Psoas muscle (tissue), 8 donors: ENCODE measurements at regions of chr20 and their contacts with region 1.

Region 1: DNA sequence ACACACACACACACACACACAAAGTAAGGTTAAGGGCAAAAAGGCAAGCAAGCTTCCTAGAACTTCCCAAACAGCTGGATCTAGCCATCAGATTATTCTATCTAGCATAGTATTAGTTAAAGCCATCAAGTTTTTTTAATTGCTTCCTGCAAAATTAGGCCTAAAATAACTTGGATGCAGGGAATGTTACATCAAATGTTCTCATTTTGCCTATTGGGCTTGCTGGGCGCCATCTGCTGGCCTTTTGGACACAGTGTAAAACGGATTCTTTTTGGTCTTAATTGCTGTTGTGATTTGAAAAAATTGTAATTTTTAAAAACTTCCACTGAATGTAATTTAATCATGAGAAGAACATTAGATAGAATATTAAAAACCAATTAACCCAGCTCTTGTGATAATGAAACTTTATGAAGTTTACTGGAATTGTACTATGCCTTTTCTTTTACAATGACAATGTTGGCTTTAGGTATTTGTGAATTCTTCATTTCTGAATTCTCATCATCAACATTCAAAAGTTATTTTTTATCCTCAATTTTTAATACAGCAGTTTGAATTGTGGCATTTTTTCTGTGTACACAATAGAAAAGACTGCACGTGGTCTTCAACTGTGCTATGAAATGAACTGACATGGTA is 6.8 kb downstream of the MKKS start:
- DNase-seq: peak; percentile 29 to 64
- ATAC-seq: peak in 1 of 4 donors; percentile 77
- H3K4me3 ChIP-seq: no peak overlapping the region
- H3K27ac ChIP-seq: no peak overlapping the region
- H3K4me1 ChIP-seq: peaks cover 40% of the 10 kb centered on the region
- H3K27me3 ChIP-seq: no peaks in the 10 kb centered on the region
- CTCF ChIP-seq: peak; percentile 69

Region 2: DNA sequence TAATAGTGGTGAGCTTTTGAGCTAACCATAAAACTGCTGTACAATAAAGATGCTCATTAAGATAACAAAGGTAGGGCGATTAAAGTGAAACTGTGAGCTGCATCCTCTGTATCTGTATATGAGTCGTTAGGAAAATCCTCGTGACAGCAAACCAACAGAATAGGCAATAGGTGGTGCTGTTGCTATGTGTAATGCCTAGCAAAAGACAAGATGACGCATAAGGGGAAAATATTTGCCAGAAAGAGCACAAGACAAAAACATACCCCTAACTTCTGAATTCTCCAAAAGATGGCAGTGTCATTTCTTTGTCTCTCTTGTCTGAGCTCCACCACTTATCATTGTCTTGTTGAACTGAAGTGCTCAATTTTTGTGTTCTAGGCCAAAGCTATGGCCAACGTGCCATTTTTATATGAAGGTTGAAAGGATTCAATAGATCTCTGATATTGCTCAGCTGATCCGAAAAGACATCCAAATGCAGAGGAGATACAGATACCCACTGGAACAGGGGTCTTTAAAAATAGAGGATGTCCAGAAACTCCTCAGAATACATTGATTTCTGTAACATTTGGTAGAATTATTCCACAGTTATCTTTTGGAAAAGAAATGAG is 448.7 kb before region 1 on chr20:
- intact Hi-C with region 1: loop called in 1 of 2 experiments (anchors 5 kb)
- DNase-seq: no peak
- ATAC-seq: peak; percentile 67 to 85 (median 76)
- H3K4me3 ChIP-seq: no peak overlapping the region
- H3K27ac ChIP-seq: no peak overlapping the region
- H3K4me1 ChIP-seq: no peaks in the 10 kb centered on the region
- H3K27me3 ChIP-seq: no peaks in the 10 kb centered on the region
- CTCF ChIP-seq: peak; percentile 74

Region 3: GRCh38 chr20:10079964-10080363 is 347.2 kb before region 1 on chr20:
- intact Hi-C with region 1: loop called in 1 of 2 experiments (anchors 10 kb)
- DNase-seq: no peak
- ATAC-seq: no peak
- H3K4me3 ChIP-seq: no peak overlapping the region
- H3K27ac ChIP-seq: no peak overlapping the region
- H3K4me1 ChIP-seq: no peaks in the 10 kb centered on the region
- H3K27me3 ChIP-seq: no peaks in the 10 kb centered on the region
- CTCF ChIP-seq: no peak

Region 4: DNA sequence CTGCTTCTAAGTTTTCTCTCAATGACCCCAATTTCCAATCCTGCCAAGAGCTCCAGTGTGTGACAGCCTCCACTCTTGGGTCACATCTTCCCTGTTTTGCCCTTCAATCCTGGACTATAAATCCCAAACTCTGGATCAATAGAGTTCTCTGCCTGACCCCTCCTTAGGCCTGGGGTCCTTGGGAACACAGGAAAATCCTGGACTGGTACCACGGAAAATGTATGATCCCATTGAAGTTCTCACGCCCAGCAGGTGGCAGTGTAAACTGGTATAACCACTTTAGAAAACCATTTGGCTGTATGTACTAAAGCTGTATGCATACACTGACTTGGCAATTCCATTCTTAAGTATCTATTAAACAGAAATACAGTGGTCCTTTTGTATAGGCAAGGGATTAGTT is 110.6 kb before region 1 on chr20:
- intact Hi-C with region 1: loop called in 1 of 2 experiments (anchors 5 kb)
- DNase-seq: no peak
- ATAC-seq: no peak
- H3K4me3 ChIP-seq: no peak overlapping the region
- H3K27ac ChIP-seq: no peak overlapping the region
- H3K4me1 ChIP-seq: no peaks in the 10 kb centered on the region
- H3K27me3 ChIP-seq: peaks cover 0 to 4% (median 0%) of the 10 kb centered on the region in 3 donors
- CTCF ChIP-seq: peak; percentile 35